SK-N-SH (cell line): ENCODE measurements at regions of chr2 and their contacts with region 1.

Region 1: DNA sequence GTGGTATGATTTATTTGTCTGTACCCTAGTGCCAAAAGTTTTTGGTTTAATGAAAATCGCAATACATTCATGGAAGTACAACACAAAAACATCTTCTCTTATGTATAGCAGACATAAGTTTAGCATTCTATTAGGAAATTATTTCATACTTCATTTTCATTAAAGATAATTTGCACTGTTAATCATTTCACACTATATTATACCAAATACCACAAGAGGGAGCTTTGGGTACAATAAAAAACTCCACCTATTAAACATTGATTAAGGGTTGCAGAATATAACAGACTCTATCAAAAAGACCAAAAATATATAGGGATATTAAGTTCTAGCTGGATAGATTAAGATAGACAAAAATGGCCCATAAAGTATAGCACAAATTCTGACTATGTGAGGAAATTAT is 79.0 kb downstream of the SLC66A3 start:
- DNase-seq: peak; percentile 31
- H3K4me3 ChIP-seq: no peak overlapping the region
- H3K27ac ChIP-seq: no peak overlapping the region
- H3K4me1 ChIP-seq: no peaks in the 10 kb centered on the region
- H3K27me3 ChIP-seq: no peaks in the 10 kb centered on the region
- CTCF ChIP-seq: peak; percentile 82
- EP300 ChIP-seq: no peak
- RAD21 ChIP-seq: peak; percentile 76

Region 2: DNA sequence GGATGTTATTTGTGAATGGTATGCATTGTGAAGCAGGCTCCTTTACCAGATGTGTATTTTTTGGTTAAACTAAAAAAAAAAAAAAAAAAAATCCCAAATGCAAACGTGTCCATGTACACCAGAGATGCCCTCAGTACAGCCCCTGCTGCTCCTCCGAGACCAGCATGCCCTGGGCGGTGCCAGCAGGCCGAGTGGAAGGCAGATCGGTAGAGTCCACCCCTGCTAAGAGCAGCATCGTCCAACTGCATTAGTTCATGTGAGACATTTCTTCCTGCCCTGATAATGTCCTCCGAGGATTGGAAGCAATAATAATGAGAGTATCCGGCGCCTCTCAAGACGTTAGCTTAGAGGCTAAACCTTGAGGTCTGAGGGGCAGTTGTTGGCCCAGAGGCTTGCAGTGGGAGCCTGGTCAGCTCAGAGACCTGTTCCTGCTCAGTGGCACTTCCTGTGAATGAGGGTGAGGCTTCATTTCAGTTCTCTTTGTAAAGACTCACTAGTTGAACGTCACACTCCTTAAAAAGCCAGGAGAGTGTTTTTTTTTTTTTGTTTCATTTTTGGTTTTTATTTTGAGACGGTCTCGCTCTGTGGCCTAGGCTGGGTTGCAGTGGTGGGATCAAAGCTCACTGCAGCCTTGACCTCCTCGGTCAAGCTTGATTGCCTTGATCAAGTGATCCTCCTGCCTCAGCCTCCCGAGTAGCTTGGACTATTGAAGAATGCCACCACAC is 73.4 kb before region 1 on chr2:
- CTCF ChIA-PET with region 1: interaction called, 11 read pairs
- POLR2A ChIA-PET with region 1: interaction called, 5 read pairs
- DNase-seq: no peak
- H3K4me3 ChIP-seq: no peak overlapping the region
- H3K27ac ChIP-seq: no peak overlapping the region
- H3K4me1 ChIP-seq: peaks cover 0 to 26% of the 10 kb centered on the region in 2 experiments; a peak in 1 of 4 replicates
- H3K27me3 ChIP-seq: no peaks in the 10 kb centered on the region
- CTCF ChIP-seq: no peak
- EP300 ChIP-seq: no peak
- RAD21 ChIP-seq: no peak

Region 3: DNA sequence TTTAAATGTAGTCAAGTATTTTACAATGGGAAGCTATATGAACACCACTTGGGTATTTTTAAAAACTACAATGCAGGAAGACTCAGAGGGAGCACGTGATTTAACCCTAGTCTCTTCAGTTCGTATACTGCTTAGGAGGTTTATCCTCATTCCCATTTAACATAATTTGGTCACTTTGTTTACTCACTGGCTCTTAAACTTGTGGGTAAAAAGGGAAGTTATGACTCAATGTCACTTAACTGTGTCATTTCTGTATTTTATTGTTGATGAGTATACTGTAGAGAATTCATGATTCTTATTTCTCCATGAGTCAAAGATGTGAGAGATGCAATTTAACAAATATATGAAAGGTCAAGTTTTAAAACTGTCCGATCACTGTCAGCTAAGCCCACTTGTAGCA is 30.8 kb before region 1 on chr2:
- CTCF ChIA-PET with region 1: interaction called, 12 read pairs
- POLR2A ChIA-PET with region 1: no interaction called
- DNase-seq: no peak
- H3K4me3 ChIP-seq: no peak overlapping the region
- H3K27ac ChIP-seq: peak overlapping the region in 1 of 2 experiments; percentile 71; a peak in 2 of 4 replicates
- H3K4me1 ChIP-seq: peaks cover 0 to 20% of the 10 kb centered on the region in 2 experiments; a peak in 1 of 4 replicates
- H3K27me3 ChIP-seq: no peaks in the 10 kb centered on the region
- CTCF ChIP-seq: no peak
- EP300 ChIP-seq: peak in 1 of 2 experiments; percentile 58; a peak in 1 of 4 replicates
- RAD21 ChIP-seq: no peak

Region 4: DNA sequence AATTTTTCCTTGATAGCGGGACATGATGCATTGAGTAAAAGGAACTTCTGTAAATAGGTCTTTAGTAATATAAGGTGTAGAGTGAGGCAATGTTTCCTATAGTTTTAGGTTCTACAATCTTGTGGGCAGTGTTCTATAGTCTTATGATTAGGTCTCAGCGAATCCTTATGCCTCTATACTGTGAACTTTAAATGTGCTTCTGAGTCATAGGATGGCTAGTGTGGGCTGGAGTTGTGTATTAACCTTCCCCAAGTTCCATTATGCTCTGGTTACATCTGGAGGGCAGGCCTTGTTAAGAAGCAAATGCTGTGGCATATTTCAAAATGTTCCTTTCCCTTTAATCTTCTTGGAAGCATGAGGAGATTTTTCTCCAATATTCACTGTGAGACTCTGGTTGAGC is 36.6 kb after region 1 on chr2:
- CTCF ChIA-PET with region 1: no interaction called
- POLR2A ChIA-PET with region 1: no interaction called
- DNase-seq: no peak
- H3K4me3 ChIP-seq: no peak overlapping the region
- H3K27ac ChIP-seq: no peak overlapping the region
- H3K4me1 ChIP-seq: no peaks in the 10 kb centered on the region
- H3K27me3 ChIP-seq: no peaks in the 10 kb centered on the region
- CTCF ChIP-seq: no peak
- EP300 ChIP-seq: no peak
- RAD21 ChIP-seq: no peak

Region 5: GRCh38 chr2:11417946-11418585 is 183.8 kb after region 1 on chr2:
- CTCF ChIA-PET with region 1: interaction called, 159 read pairs
- POLR2A ChIA-PET with region 1: no interaction called
- DNase-seq: no peak
- H3K4me3 ChIP-seq: no peak overlapping the region
- H3K27ac ChIP-seq: no peak overlapping the region
- H3K4me1 ChIP-seq: peaks cover 0 to 2% of the 10 kb centered on the region in 2 experiments; a peak in 1 of 4 replicates
- H3K27me3 ChIP-seq: no peaks in the 10 kb centered on the region
- CTCF ChIP-seq: peak; percentile 44
- EP300 ChIP-seq: no peak
- RAD21 ChIP-seq: peak; percentile 18; the same call in 1 of the 2 replicates